Activated CD8-positive, alpha-beta T cell treated with anti-CD3 and anti-CD28 coated beads for 36 hours (primary cell): ENCODE measurements at regions of chr1 and their contacts with region 1.

Region 1: DNA sequence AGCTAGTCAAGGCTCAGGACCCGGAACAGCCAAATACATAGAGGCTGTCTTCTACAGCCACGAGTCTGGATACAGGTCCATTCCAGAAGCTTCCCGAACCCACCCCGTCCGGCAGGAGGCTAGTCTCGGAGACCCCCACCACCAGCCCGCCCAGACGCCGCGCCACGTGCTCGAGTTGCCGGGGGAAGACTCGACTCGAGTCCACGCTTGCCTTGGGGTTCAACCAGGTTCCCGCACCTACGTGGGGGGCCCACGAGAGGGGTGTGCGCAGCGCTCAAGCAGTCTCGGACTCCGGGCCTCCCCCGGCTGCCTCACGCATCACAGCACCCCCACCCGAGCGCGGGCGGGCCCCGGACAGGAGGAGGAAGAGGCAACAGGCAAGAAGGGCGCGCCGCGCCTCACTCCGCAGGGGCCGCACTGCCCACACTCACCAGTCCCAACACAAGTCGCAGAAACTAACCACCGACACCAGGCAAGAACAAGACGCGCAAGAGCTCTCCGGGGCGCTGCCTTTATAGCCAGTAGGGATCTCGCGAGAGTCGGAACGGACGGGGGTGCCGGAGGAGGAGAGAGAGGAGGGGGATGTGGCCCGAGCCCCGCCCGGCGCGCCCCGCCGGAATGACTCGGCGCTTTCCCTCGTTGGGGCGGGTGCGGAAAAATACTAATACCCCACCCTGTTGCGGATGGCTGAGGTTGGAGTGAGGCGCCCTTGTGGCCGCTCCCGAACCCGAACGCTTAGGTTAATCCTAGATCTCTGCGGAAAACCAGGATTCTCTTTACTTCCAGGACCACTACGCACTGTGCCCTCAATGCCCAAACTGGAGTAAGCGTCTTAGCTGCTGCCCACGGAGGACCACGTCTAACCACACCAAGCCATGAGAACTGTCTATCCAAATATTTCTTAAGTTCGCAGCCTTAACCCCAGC is at the start of gene PRDX1:
- DNase-seq: peak; percentile 96
- ATAC-seq: peak; percentile 92
- H3K4me3 Mint-ChIP-seq: peak within 1 kb of the TSS; percentile 97
- H3K27ac Mint-ChIP-seq: peak within 1 kb of the TSS; percentile 95
- H3K4me1 Mint-ChIP-seq: peaks cover 38% of the 10 kb centered on the region
- H3K27me3 Mint-ChIP-seq: peaks cover 1% of the 10 kb centered on the region
- CTCF ChIP-seq: no peak
- total RNA-seq, gene PRDX1: 547 to 553 TPM

Region 2: DNA sequence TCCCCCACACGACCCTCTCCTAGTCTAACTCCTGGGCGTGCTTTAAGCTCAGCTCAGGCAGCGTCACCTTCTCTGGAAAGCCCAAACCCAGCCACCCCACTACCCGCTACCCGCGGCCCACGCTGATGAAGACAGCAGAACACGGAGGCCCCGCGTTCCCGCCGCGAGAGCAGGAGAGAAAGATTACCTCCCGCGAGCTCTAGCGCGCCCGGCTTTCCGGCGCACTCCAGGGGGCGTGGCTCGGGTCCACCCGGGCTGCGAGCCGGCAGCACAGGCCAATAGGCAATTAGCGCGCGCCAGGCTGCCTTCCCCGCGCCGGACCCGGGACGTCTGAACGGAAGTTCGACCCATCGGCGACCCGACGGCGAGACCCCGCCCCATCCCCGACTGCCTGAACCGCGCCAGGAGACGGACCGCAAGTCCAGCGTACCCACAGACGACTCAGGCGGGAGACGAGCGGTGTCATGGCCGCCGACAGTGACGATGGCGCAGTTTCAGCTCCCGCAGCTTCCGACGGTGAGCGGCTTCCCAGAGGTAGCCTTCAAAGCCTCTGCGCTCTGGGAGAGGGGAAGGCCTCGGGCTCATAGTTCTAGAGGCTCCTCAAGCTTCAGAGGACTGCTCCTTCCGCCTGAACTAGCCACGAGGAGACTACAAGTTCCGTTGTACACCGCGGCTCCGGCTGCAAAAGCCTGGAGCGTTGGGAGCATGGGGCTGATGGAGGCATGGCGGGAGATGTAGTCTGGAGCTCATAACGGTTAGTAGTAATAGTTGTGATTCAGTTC is 181.7 kb before region 1 on chr1 and contains the starts of genes MUTYH and TOE1:
- CTCF ChIA-PET with region 1: no interaction called
- POLR2A ChIA-PET with region 1: interaction called, 15 read pairs
- intact Hi-C with region 1: no loop called
- DNase-seq: peak; percentile 97
- ATAC-seq: peak; percentile 87
- H3K4me3 Mint-ChIP-seq: peak within 1 kb of the TSS; percentile 99
- H3K27ac Mint-ChIP-seq: peak within 1 kb of the TSS; percentile 99
- H3K4me1 Mint-ChIP-seq: peaks cover 37% of the 10 kb centered on the region
- H3K27me3 Mint-ChIP-seq: no peaks in the 10 kb centered on the region
- CTCF ChIP-seq: no peak
- total RNA-seq, gene MUTYH: 51.4 to 54.5 TPM
- total RNA-seq, gene TOE1: 25.7 to 28.1 TPM

Region 3: GRCh38 chr1:45499415-45499769 is 22.3 kb before region 1 on chr1:
- CTCF ChIA-PET with region 1: no interaction called
- POLR2A ChIA-PET with region 1: interaction called, 21 read pairs
- intact Hi-C with region 1: no loop called
- DNase-seq: peak; percentile 39
- ATAC-seq: no peak
- H3K4me3 Mint-ChIP-seq: peak overlapping the region; percentile 98
- H3K27ac Mint-ChIP-seq: peak overlapping the region; percentile 93
- H3K4me1 Mint-ChIP-seq: peaks cover 29% of the 10 kb centered on the region
- H3K27me3 Mint-ChIP-seq: no peaks in the 10 kb centered on the region
- CTCF ChIP-seq: peak; percentile 28

Region 4: DNA sequence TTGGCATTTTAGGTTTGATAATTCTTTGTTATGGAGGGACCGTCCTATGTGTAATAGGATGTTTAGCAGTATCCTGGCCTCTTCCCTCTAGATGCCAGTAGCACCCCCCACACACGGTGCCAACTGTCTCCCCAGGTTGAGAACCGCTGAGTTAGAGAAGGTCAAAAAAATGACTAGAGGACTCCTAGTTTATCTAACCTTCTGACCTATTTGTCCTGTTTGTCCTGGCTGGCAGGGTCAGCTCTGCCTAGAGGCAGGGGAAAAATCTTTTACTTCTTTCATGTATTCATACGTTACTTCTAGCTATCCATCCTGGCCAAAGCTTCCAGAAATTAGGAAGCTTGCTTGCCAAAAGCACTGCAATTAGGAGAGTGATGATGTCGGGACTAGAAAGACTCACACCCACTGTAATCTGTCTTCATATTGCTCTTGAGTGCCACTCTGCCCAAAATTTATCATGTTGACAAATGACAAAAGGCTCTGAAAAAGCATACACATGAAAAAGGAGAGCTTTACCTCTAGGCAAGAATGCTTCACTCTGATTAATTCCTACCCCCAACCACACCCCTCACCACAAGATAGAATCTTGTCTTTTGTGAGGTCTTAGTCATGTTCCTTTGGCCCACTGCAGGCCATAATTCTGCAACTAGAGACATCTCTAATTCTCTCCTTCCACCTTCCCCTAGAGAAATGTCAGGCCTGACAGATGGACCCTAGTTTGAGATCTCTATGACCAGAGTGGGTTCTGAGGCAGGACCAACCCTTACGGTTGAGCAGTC is 14.5 kb after region 1 on chr1:
- CTCF ChIA-PET with region 1: interaction called, 4 read pairs
- POLR2A ChIA-PET with region 1: interaction called, 29 read pairs
- intact Hi-C with region 1: no loop called
- DNase-seq: no peak
- ATAC-seq: peak; percentile 83
- H3K4me3 Mint-ChIP-seq: no peak overlapping the region
- H3K27ac Mint-ChIP-seq: no peak overlapping the region
- H3K4me1 Mint-ChIP-seq: peaks cover 13% of the 10 kb centered on the region
- H3K27me3 Mint-ChIP-seq: peaks cover 1% of the 10 kb centered on the region
- CTCF ChIP-seq: no peak

Region 5: DNA sequence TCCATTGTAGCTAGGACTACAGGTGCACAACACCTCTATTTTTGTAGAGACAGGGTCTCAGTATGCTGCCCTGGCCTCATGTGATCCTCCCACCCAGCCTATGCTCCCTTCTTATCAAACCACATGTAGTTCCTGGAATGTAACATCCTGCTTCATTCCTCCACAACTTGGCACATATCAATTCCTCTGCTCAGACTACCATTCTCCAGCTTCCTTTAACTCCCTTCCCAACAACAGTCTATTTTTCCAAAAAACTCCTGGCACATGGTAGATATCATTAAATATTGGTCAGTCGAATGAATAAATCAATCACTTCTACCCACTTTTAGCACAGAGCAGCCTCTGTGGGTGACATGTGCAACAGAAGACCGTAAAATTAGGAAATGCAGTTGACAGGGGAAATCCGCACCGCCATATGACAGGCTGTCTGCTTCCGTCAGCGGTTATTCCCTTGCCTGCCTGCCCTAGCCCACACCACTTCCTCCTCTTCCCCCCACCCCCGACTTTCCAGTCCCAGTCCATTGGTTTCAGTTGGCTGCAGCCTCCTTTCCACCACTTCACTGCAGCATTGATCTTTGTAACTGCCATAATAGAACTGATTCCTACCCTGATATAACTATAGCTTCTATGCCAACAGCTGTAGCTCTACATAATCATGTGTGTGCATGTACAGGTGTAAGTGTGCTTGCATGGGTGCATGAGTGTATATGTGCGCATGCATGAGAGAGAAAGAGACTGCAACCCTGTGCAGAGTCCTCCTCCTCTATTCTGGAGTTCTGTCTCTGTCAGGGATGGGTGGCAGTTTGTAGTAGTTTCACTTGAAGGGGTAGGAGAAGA is 22.1 kb after region 1 on chr1:
- CTCF ChIA-PET with region 1: interaction called, 4 read pairs
- POLR2A ChIA-PET with region 1: interaction called, 85 read pairs
- intact Hi-C with region 1: no loop called
- DNase-seq: peak; percentile 83
- ATAC-seq: peak; percentile 90
- H3K4me3 Mint-ChIP-seq: peak overlapping the region; percentile 22
- H3K27ac Mint-ChIP-seq: peak overlapping the region; percentile 73
- H3K4me1 Mint-ChIP-seq: peaks cover 35% of the 10 kb centered on the region
- H3K27me3 Mint-ChIP-seq: peaks cover 1% of the 10 kb centered on the region
- CTCF ChIP-seq: no peak

Region 6: GRCh38 chr1:45550401-45551351 is 29.0 kb after region 1 on chr1 and contains the start of gene AKR1A1:
- CTCF ChIA-PET with region 1: interaction called, 6 read pairs
- POLR2A ChIA-PET with region 1: interaction called, 85 read pairs
- intact Hi-C with region 1: loop called (anchors 5 kb)
- DNase-seq: peak; percentile 93
- ATAC-seq: peak; percentile 94
- H3K4me3 Mint-ChIP-seq: peak within 1 kb of the TSS; percentile 100
- H3K27ac Mint-ChIP-seq: peak within 1 kb of the TSS; percentile 98
- H3K4me1 Mint-ChIP-seq: peaks cover 25% of the 10 kb centered on the region
- H3K27me3 Mint-ChIP-seq: peaks cover 1% of the 10 kb centered on the region
- CTCF ChIP-seq: no peak
- total RNA-seq, gene AKR1A1: 184 to 186 TPM

Region 7: GRCh38 chr1:45686317-45687013 is 164.8 kb after region 1 on chr1 and contains the start of gene GPBP1L1:
- CTCF ChIA-PET with region 1: no interaction called
- POLR2A ChIA-PET with region 1: interaction called, 14 read pairs
- intact Hi-C with region 1: no loop called
- DNase-seq: peak; percentile 98
- ATAC-seq: peak; percentile 78
- H3K4me3 Mint-ChIP-seq: peak within 1 kb of the TSS; percentile 91
- H3K27ac Mint-ChIP-seq: peak within 1 kb of the TSS; percentile 95
- H3K4me1 Mint-ChIP-seq: peaks cover 37% of the 10 kb centered on the region
- H3K27me3 Mint-ChIP-seq: no peaks in the 10 kb centered on the region
- CTCF ChIP-seq: no peak
- total RNA-seq, gene GPBP1L1: 95.7 to 105 TPM

Region 8: DNA sequence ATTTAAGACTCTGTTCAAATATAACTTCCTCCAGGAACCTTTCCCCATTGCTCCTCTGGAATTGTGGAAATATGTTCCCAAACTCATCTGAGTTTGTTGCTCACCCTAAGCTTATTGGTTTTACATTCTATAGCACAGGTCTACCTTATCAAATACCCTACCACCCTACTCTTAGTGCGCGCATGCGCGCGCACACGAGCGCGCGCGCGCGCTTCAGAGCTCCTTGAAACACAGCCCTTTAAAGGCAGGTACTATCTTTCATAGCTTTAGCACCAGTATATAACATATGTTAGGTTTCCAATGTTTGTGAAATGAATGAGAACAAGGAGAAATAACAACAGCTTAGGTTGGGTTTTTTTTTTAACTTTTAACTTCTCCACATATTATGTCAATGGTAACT is 225.3 kb after region 1 on chr1:
- CTCF ChIA-PET with region 1: no interaction called
- POLR2A ChIA-PET with region 1: no interaction called
- intact Hi-C with region 1: no loop called
- DNase-seq: no peak
- ATAC-seq: no peak
- H3K4me3 Mint-ChIP-seq: no peak overlapping the region
- H3K27ac Mint-ChIP-seq: peak overlapping the region; percentile 15
- H3K4me1 Mint-ChIP-seq: peaks cover 19% of the 10 kb centered on the region
- H3K27me3 Mint-ChIP-seq: no peaks in the 10 kb centered on the region
- CTCF ChIP-seq: no peak